ENCODE measurements at regions of chr1 and their contacts with region 1.

Region 1: GRCh38 chr1:32239790-32240139 is 7.3 kb upstream of the FAM167B start:
- DNase-seq: no peak
- H3K4me3 ChIP-seq: peak overlapping the region in 2 of 3 donors; percentile 69 to 73
- H3K27ac ChIP-seq: peak overlapping the region; percentile 89 to 96
- H3K4me1 ChIP-seq: peaks cover 0 to 8% of the 10 kb centered on the region in 2 donors
- H3K27me3 ChIP-seq: no peaks in the 10 kb centered on the region
- CTCF ChIP-seq: no peak
- POLR2A ChIP-seq: no peak

Region 2: GRCh38 chr1:31938174-31938950 is 301.4 kb before region 1 on chr1 and contains the start of gene PTP4A2:
- intact Hi-C with region 1: loop called (anchors 5 kb)
- DNase-seq: peak; percentile 85 to 91
- H3K4me3 ChIP-seq: peak within 1 kb of the TSS; percentile 72 to 99 (median 75)
- H3K27ac ChIP-seq: peak within 1 kb of the TSS; percentile 97 to 100
- H3K4me1 ChIP-seq: peaks cover 6 to 22% of the 10 kb centered on the region in 2 donors
- H3K27me3 ChIP-seq: no peaks in the 10 kb centered on the region
- CTCF ChIP-seq: peak in 1 of 3 donors; percentile 85
- POLR2A ChIP-seq: no peak
- total RNA-seq, gene PTP4A2: 225 to 271 (median 252) TPM

Measured in breast epithelium (tissue), 4 donors.